ENCODE measurements at regions of chr16 and their contacts with region 1.

Region 1: GRCh38 chr16:69132424-69133252 is at the starts of genes CHTF8 and UTP4:
- DNase-seq: peak; percentile 93 to 97
- ATAC-seq: peak; percentile 95
- H3K4me3 ChIP-seq: peak within 1 kb of the TSS; percentile 81 to 98
- H3K27ac ChIP-seq: peak within 1 kb of the TSS in 1 of 2 donors; percentile 59
- H3K4me1 ChIP-seq: no peaks in the 10 kb centered on the region
- H3K27me3 ChIP-seq: no peaks in the 10 kb centered on the region
- total RNA-seq, gene CHTF8: 73.2 to 77.3 TPM
- total RNA-seq, gene UTP4: 34.9 to 37.6 TPM

Region 2: GRCh38 chr16:69186642-69187445 is 54.2 kb after region 1 on chr16 and contains the start of gene SNTB2:
- intact Hi-C with region 1: loop called in 1 of 2 experiments (anchors 10 kb)
- DNase-seq: peak; percentile 96 to 97
- ATAC-seq: peak; percentile 96
- H3K4me3 ChIP-seq: peak within 1 kb of the TSS; percentile 58 to 88
- H3K27ac ChIP-seq: peak within 1 kb of the TSS; percentile 78 to 91
- H3K4me1 ChIP-seq: peaks cover 0 to 4% of the 10 kb centered on the region in 2 donors
- H3K27me3 ChIP-seq: no peaks in the 10 kb centered on the region
- total RNA-seq, gene SNTB2: 49.6 to 67.1 TPM

Measured in aorta (tissue), 5 donors.